Right ventricle myocardium superior (tissue), 1 donor: ENCODE measurements at regions of chr3 and their contacts with region 1.

Region 1: DNA sequence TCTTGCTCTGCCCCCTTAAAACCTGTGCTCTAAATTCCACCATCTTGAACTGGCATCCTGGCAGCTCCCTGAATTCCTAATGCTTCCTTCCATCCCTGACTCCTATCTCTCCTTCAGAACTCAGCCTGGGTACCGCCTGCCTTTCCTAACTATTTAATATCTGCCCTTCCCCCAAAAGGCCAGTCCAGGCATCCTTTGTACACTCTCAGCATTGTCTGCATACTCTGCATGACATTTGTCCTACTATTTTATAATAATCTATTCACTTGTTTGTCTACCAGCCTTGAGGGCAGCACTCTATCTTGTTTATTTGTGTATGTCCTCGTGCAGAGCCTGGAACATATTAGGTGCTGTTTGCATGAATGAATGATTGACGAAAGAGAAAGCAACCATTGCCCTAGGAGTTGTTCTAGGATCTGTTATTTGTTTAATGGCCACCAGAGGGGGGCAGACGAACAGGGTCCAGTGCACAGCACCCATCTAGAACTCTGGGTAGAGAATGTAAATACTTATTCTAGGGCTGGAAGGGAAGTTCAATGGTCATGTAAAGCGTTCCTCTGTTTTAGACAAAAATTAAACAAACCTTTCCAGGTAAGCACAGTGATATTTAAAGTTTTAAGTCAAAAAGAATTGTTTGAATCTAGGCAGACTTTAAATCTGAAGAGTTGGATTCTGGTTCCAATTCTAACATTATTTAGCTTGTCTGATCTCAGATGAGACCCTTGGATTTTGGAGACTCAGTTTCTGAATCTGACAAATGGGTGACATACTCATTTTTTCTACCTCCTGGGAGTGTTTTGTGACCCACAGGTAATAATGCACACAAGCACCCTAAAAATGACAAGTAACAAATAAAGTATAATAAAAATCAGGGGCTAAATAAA is 125.8 kb upstream of the GALNT15 start:
- DNase-seq: no peak
- ATAC-seq: peak; percentile 92

Region 2: DNA sequence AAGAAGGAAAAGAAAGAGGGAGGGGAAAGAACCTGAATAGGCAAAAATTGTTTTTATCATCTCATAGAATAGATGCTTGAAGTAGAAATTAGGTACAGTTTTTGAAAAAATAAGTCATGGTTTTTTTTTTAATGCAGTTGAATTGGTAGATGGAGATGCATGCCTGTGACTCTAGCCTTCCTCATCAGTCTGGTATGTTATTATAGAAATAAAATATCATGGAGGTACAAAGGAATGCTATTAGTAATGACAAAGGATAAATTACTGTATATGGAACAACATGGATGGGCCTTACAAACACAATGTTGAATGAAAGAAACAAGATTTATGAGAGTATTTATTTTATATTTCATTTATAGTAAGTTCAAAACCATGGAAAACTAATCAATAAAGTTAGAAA is 36.6 kb before region 1 on chr3:
- intact Hi-C with region 1: no loop called
- DNase-seq: no peak
- ATAC-seq: no peak

Region 3: GRCh38 chr3:16177962-16178627 is 129.4 kb after region 1 on chr3:
- intact Hi-C with region 1: loop called (anchors 2 kb)
- DNase-seq: peak; percentile 91
- ATAC-seq: peak; percentile 79

Region 4: GRCh38 chr3:16247276-16248061 is 198.8 kb after region 1 on chr3:
- intact Hi-C with region 1: loop called (anchors 2 kb)
- DNase-seq: peak; percentile 78
- ATAC-seq: peak; percentile 69

Region 5: GRCh38 chr3:16550676-16551341 is 502.1 kb after region 1 on chr3:
- intact Hi-C with region 1: loop called (anchors 10 kb)
- DNase-seq: no peak
- ATAC-seq: peak; percentile 87